ENCODE measurements at regions of chr15 and their contacts with region 1.

Region 1: DNA sequence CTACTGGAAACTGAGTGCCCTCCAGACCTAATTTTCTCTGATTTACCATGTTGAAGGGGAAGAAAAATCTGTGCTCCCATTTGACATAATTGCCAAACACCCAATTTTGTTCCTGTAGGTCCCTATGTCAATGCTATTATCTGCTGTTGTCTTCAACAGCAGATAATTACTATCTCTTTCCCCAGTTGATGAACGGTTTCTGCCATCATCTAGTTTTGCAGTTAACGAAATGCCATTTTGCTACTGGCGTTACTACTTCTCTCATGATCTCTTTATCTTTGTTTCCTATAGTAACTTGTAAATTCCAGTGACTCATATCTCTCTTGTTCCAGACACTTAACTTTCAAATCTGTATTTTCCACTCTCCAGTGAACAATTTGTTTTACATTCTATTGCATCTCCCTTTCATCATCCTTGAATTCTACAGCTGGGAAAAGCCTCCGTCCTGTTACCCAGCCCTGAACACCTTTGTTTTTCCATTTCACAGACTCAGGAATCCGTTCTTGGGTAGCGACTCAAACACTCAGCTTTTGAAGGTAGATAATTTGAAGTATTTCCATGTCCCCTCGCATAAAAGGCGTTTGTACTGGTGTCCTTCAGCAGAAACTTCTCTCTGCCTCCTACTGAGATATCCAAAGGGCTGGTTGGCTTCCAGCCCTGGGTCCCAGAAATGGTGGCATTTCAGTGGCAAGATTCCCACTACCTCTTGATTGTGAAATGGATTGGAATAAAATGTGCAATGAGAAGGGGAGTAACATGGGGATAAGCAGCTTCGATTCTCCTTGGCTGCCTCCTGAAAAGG is 111.7 kb downstream of the FOXB1 start:
- DNase-seq: no peak
- ATAC-seq: no peak
- H3K4me3 ChIP-seq: no peak overlapping the region
- H3K4me3 Mint-ChIP-seq: no peak overlapping the region
- H3K27ac ChIP-seq: no peak overlapping the region
- H3K27ac Mint-ChIP-seq: no peak overlapping the region
- H3K4me1 ChIP-seq: no peaks in the 10 kb centered on the region
- H3K4me1 Mint-ChIP-seq: peaks cover 4% of the 10 kb centered on the region
- H3K27me3 ChIP-seq: no peaks in the 10 kb centered on the region
- H3K27me3 Mint-ChIP-seq: peaks cover 3% of the 10 kb centered on the region
- CTCF ChIP-seq: no peak

Region 2: GRCh38 chr15:60155666-60156065 is 39.9 kb after region 1 on chr15:
- CTCF ChIA-PET with region 1: no interaction called
- POLR2A ChIA-PET with region 1: no interaction called
- intact Hi-C with region 1: loop called in 1 of 2 experiments (anchors 1 kb)
- DNase-seq: no peak
- ATAC-seq: no peak
- H3K4me3 ChIP-seq: no peak overlapping the region
- H3K4me3 Mint-ChIP-seq: no peak overlapping the region
- H3K27ac ChIP-seq: no peak overlapping the region
- H3K27ac Mint-ChIP-seq: no peak overlapping the region
- H3K4me1 ChIP-seq: no peaks in the 10 kb centered on the region
- H3K4me1 Mint-ChIP-seq: no peaks in the 10 kb centered on the region
- H3K27me3 ChIP-seq: peaks cover 0 to 3% of the 10 kb centered on the region in 2 experiments
- H3K27me3 Mint-ChIP-seq: peaks cover 19% of the 10 kb centered on the region
- CTCF ChIP-seq: no peak

Region 3: GRCh38 chr15:60408438-60409105 is 292.8 kb after region 1 on chr15:
- CTCF ChIA-PET with region 1: no interaction called
- POLR2A ChIA-PET with region 1: no interaction called
- intact Hi-C with region 1: no loop called
- DNase-seq: peak in 2 of 9 experiments; percentile 30 to 51
- ATAC-seq: peak; percentile 75
- H3K4me3 ChIP-seq: no peak overlapping the region
- H3K4me3 Mint-ChIP-seq: no peak overlapping the region
- H3K27ac ChIP-seq: peak overlapping the region in 1 of 2 experiments; percentile 57
- H3K27ac Mint-ChIP-seq: peak overlapping the region; percentile 34
- H3K4me1 ChIP-seq: peaks cover 8% of the 10 kb centered on the region
- H3K4me1 Mint-ChIP-seq: peaks cover 9% of the 10 kb centered on the region
- H3K27me3 ChIP-seq: no peaks in the 10 kb centered on the region
- H3K27me3 Mint-ChIP-seq: no peaks in the 10 kb centered on the region
- CTCF ChIP-seq: no peak

Measured in CD8-positive, alpha-beta T cell (primary cell).